Posterior vena cava (tissue), 2 donors: ENCODE measurements at regions of chr5 and their contacts with region 1.

Region 1: GRCh38 chr5:54289777-54290176 is 20.6 kb downstream of the ARL15 start:
- DNase-seq: no peak

Region 2: DNA sequence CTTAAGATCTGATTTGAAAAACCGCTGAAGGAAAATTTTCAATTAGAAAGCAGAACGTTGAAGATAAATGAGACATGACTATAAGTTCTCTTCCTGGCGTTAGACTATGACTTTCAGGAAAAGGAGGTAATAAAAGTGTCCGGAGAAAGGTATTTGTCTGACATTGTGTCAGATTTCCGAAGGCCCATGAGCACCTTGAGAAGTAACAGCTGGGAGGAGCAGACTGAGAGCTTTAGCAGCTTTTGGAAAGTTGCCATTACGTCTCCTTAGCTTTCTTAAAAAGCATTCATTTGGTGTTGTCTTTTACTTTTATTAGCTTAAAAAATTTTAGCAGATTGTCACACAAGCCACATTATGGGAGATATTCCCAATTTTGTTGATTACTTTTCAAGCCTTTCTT is 365.8 kb before region 1 on chr5:
- intact Hi-C with region 1: loop called in 1 of 2 experiments (anchors 5 kb)
- DNase-seq: no peak

Region 3: GRCh38 chr5:56126487-56127179 is 1836.9 kb after region 1 on chr5:
- intact Hi-C with region 1: no loop called
- DNase-seq: no peak